ENCODE measurements at regions of chr22 and their contacts with region 1.

Region 1: DNA sequence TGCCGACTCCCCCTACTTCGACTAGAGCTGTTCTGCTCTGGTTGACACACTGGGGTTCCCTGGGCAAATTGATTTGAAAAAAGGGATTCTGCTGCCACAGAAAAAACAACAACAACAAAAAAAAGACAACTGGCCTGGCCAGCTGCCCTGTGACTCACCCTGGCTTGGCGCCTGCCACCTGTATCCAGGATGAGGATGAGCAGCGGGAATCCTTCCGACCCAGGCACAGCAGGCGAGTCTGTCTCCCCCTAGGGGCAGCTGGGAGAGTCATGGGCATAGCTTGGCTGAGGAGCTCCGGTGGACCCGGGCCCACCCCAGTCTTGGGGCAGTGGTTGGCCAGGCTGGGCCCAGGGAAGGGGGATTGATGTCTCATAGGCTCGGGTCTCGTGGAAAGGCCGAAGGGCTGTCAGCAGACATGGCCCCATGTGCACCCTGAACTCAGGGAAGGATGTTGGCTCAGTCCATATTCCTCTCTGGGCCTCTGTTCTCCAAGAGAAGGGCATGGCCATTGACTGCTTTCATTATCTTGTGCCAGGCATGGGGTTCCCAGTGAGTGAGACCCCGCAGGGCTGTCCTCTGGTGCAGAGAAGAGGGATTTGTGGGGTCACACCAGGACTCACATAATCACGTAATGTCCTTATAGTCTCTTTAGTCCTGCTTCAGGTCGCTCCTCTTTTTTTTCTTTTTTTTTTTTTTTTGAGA is 10.4 kb upstream of the SUN2 start:
- DNase-seq: peak; percentile 30
- H3K4me3 ChIP-seq: no peak overlapping the region
- H3K27ac ChIP-seq: no peak overlapping the region
- H3K4me1 ChIP-seq: no peaks in the 10 kb centered on the region
- H3K27me3 ChIP-seq: no peaks in the 10 kb centered on the region
- CTCF ChIP-seq: peak; percentile 84 to 90
- POLR2A ChIP-seq: no peak

Region 2: GRCh38 chr22:38272373-38273134 is 493.7 kb before region 1 on chr22 and contains the start of gene TMEM184B:
- CTCF ChIA-PET with region 1: no interaction called
- POLR2A ChIA-PET with region 1: no interaction called
- dilution Hi-C with region 1: no loop called
- intact Hi-C with region 1: no loop called
- DNase-seq: peak; percentile 75
- H3K4me3 ChIP-seq: peak within 1 kb of the TSS; percentile 86 to 99 (median 92)
- H3K27ac ChIP-seq: peak within 1 kb of the TSS; percentile 76
- H3K4me1 ChIP-seq: peaks cover 20% of the 10 kb centered on the region
- H3K27me3 ChIP-seq: peaks cover 0 to 3% of the 10 kb centered on the region in 2 experiments
- CTCF ChIP-seq: no peak
- POLR2A ChIP-seq: peak; percentile 84
- total RNA-seq, gene TMEM184B: 96.6 and 99.8 TPM in 2 replicates

Region 3: GRCh38 chr22:38782402-38783094 is 16.3 kb after region 1 on chr22:
- CTCF ChIA-PET with region 1: interaction called, 82 read pairs
- POLR2A ChIA-PET with region 1: no interaction called
- dilution Hi-C with region 1: no loop called
- intact Hi-C with region 1: no loop called
- DNase-seq: no peak
- H3K4me3 ChIP-seq: no peak overlapping the region
- H3K27ac ChIP-seq: no peak overlapping the region
- H3K4me1 ChIP-seq: no peaks in the 10 kb centered on the region
- H3K27me3 ChIP-seq: no peaks in the 10 kb centered on the region
- CTCF ChIP-seq: no peak
- POLR2A ChIP-seq: no peak

Region 4: GRCh38 chr22:38824585-38824984 is 58.4 kb after region 1 on chr22:
- CTCF ChIA-PET with region 1: interaction called, 16 read pairs
- POLR2A ChIA-PET with region 1: no interaction called
- dilution Hi-C with region 1: no loop called
- intact Hi-C with region 1: no loop called
- DNase-seq: peak; percentile 69
- H3K4me3 ChIP-seq: no peak overlapping the region
- H3K27ac ChIP-seq: no peak overlapping the region
- H3K4me1 ChIP-seq: no peaks in the 10 kb centered on the region
- H3K27me3 ChIP-seq: no peaks in the 10 kb centered on the region
- CTCF ChIP-seq: peak; percentile 29 to 57
- POLR2A ChIP-seq: no peak

Region 5: DNA sequence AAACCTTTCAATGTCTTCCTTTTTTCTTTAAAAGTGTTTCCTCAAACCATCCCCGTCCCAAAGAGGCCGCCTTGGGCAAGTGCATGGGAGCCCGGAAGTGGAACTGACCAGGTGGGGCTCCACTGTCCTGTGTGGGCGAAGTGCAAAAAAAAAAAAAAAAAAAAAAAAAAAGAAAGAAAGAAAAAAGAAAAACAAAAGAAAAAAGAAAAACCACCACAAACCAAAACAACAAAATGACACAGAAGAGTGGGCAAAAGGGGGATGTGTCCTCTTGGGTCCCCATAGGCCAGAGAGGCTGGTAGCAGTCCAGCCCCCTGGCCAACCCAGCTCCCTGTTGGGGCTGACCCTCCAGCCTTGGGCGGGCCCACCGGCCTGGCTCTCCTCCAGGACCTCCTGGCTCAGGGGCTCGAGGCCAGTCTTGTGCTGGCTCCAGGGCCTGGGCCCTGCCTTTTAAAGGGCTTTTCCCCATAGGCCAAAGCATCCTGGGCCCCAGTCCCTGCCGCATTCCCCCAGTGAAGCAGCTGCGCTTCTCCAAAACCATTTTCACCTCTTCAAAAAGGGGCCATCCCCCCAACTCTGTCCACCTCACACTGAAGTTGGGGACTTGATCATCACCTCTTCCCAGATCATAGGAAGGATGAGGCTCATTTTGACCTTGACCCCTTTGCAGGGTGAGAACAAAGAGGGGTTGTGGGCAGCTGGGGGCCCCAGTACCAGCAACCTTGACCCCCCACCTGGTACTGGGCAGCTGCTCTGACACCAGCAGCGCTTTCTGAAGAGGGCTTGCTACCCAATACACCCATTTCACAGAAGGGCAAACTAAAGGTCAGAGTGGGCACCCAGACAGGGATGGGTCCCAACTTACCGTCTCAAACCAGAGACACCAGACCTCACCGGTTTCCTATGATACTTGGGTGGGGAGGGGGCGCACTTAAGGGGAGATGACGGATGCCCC is 96.4 kb after region 1 on chr22:
- CTCF ChIA-PET with region 1: interaction called, 131 read pairs
- POLR2A ChIA-PET with region 1: no interaction called
- dilution Hi-C with region 1: no loop called
- intact Hi-C with region 1: no loop called
- DNase-seq: no peak
- H3K4me3 ChIP-seq: no peak overlapping the region
- H3K27ac ChIP-seq: no peak overlapping the region
- H3K4me1 ChIP-seq: peaks cover 18% of the 10 kb centered on the region
- H3K27me3 ChIP-seq: no peaks in the 10 kb centered on the region
- CTCF ChIP-seq: no peak
- POLR2A ChIP-seq: no peak

Region 6: DNA sequence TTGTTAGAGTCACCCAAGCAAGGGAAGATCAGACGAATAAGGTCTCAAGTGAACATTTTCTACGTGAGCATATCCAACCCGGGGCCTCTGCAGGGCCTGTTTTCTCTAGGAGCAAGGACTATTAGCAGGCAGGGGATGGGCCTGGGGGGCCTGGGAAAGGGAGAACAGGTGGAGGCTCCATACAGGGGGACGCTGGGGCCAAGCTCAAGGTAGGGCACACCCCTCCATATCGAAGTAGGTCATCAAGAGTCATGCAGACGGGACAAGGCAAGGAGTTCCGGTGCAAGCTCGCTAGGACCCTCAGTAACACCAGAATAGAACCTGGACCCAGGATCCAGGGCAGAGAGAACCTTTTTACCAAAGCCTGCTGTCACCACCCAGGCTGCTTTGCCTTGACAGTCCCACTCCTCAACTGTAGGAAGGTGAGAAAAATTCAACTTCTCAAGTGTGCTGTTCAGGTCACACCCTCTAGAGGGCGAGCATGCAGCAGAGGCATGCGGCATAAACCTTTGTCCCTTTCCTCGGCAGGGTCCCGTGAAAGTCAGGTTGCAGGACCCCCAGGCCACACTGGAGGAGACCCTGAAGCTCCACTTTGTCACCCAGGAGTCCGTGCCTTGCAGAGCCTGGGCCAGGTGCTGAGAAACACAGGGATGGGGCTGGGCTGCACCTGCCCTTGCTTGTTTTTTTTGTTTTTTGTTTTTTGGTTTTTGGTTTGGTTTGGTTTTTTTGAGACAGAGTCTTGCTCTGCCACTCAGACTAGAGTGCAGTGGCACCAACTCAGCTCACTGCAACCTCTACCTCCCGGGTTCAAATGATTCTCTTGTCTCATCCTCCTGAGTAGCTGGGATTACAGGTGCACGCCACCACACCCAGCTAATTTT is 207.3 kb after region 1 on chr22:
- CTCF ChIA-PET with region 1: interaction called, 12 read pairs
- POLR2A ChIA-PET with region 1: no interaction called
- dilution Hi-C with region 1: no loop called
- intact Hi-C with region 1: no loop called
- DNase-seq: peak; percentile 46
- H3K4me3 ChIP-seq: no peak overlapping the region
- H3K27ac ChIP-seq: no peak overlapping the region
- H3K4me1 ChIP-seq: no peaks in the 10 kb centered on the region
- H3K27me3 ChIP-seq: no peaks in the 10 kb centered on the region
- CTCF ChIP-seq: peak; percentile 74 to 83
- POLR2A ChIP-seq: no peak

Region 7: DNA sequence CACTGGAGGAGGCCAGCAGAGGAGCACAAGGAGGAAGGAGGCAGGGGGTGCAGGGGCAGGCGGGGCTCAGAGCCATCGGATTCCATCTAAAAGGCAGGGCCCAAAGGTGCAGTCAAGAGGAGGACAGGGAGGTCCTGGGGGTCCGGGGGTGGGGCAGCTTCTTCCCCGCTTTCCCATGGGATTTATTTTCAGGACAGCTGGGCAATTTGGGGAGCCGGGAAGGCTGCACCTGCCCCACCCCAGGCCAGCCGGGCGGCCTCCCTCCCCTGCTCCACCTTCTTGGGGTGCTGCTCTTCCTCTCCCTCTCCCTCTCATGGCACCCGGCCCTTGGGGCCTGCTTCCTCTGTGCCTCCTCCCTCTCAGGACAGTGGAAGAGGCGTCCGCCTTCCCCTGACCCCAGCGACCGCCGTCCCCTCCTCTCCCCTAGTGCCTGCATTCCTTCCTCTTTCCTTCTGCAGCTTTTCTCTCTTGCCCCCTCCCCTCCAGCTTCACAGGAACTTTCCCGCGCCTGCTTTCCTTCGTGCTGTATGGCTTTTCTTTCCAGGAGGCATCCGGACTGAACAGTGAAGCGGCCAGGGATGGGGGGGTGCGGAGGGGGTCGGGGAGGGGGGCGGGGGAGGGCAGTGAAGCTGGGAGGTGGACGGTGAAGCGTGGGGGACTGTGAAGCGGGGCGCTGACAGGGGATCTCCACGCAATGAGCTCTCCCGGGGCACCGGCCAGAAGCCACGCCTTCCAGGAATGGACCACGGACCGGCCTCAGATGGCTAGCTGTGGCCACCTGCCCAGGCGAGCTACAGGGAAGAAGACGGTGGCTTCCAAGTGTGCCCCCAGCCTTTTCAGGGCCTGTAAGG is 357.7 kb after region 1 on chr22:
- CTCF ChIA-PET with region 1: interaction called, 87 read pairs
- POLR2A ChIA-PET with region 1: no interaction called
- dilution Hi-C with region 1: no loop called
- intact Hi-C with region 1: loop called (anchors 2 kb)
- DNase-seq: no peak
- H3K4me3 ChIP-seq: no peak overlapping the region
- H3K27ac ChIP-seq: no peak overlapping the region
- H3K4me1 ChIP-seq: no peaks in the 10 kb centered on the region
- H3K27me3 ChIP-seq: peaks cover 3 to 4% of the 10 kb centered on the region in 2 experiments
- CTCF ChIP-seq: no peak
- POLR2A ChIP-seq: no peak

Region 8: DNA sequence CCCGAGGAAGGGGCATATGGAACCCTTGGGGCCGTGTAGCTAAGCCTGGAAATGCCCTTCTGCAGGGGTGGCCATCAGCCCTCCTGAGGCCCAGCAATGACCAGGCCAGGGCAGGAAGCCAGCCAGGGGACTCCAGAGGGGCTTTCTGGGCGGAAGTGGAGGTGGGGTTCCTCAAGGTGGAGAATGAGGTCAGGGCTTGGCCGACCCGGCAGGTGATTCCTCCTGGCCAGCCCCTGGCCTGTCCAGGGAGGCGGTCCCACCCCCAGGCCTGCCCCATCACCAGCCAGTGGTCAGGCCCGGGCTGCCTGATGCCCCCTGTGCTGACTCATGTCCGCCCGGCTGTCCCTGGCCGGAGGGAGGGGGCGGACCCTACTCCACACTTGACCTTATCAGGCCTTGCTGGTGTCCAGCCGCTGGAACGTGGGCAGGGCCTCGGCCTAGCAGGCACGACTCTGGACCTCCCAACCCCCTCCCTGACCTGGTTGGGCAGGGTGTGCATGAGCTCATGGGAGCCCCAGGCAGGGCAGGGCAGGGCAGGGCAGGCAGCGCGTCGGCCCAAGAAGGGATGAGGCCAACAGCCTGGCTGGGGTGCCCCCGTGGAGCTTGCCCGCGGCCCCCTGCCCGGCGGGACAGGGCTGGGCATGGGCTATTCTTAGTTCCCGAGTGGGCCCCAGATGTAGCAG is 517.2 kb after region 1 on chr22:
- CTCF ChIA-PET with region 1: no interaction called
- POLR2A ChIA-PET with region 1: no interaction called
- dilution Hi-C with region 1: no loop called
- intact Hi-C with region 1: no loop called
- DNase-seq: peak; percentile 91
- H3K4me3 ChIP-seq: no peak overlapping the region
- H3K27ac ChIP-seq: peak overlapping the region; percentile 93
- H3K4me1 ChIP-seq: peaks cover 43% of the 10 kb centered on the region
- H3K27me3 ChIP-seq: no peaks in the 10 kb centered on the region
- CTCF ChIP-seq: no peak
- POLR2A ChIP-seq: peak; percentile 53

Measured in endothelial cell of umbilical vein (primary cell).